ENCODE measurements at regions of chr2 and their contacts with region 1.

Region 1: GRCh38 chr2:143909577-143910353 is 610.2 kb downstream of the ZEB2 start:
- DNase-seq: no peak
- ATAC-seq: no peak
- H3K4me3 ChIP-seq: no peak overlapping the region
- H3K27ac ChIP-seq: no peak overlapping the region
- H3K4me1 ChIP-seq: no peaks in the 10 kb centered on the region
- H3K27me3 ChIP-seq: no peaks in the 10 kb centered on the region; the same call in 1 of the 2 replicates
- CTCF ChIP-seq: no peak

Region 2: DNA sequence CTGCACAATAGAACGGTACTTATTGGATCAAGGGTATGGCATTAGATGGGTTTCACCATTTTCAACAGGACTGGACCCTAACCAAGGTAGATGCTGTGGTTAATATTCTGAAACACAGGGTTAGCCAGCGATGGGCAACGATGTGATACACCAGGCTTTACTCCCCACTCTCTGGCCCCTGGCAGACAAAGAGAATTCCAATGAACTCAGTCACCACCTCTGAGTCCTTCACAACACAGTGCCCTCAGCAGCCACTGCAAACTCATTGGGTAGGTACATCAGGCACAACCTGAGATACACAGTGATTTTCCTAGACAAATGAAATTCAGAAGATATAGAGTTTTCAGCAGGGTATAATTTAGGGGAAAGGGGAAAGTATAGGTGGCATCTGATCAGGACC is 24.3 kb before region 1 on chr2:
- CTCF ChIA-PET with region 1: no interaction called
- POLR2A ChIA-PET with region 1: no interaction called
- in situ Hi-C with region 1: no loop called
- intact Hi-C with region 1: no loop called
- DNase-seq: no peak
- ATAC-seq: no peak
- H3K4me3 ChIP-seq: no peak overlapping the region
- H3K27ac ChIP-seq: no peak overlapping the region
- H3K4me1 ChIP-seq: no peaks in the 10 kb centered on the region
- H3K27me3 ChIP-seq: no peaks in the 10 kb centered on the region
- CTCF ChIP-seq: no peak

Region 3: GRCh38 chr2:144111437-144111836 is 201.7 kb after region 1 on chr2:
- CTCF ChIA-PET with region 1: no interaction called
- POLR2A ChIA-PET with region 1: no interaction called
- in situ Hi-C with region 1: no loop called
- intact Hi-C with region 1: no loop called
- DNase-seq: no peak
- ATAC-seq: no peak
- H3K4me3 ChIP-seq: no peak overlapping the region
- H3K27ac ChIP-seq: no peak overlapping the region
- H3K4me1 ChIP-seq: no peaks in the 10 kb centered on the region
- H3K27me3 ChIP-seq: no peaks in the 10 kb centered on the region
- CTCF ChIP-seq: no peak

Region 4: DNA sequence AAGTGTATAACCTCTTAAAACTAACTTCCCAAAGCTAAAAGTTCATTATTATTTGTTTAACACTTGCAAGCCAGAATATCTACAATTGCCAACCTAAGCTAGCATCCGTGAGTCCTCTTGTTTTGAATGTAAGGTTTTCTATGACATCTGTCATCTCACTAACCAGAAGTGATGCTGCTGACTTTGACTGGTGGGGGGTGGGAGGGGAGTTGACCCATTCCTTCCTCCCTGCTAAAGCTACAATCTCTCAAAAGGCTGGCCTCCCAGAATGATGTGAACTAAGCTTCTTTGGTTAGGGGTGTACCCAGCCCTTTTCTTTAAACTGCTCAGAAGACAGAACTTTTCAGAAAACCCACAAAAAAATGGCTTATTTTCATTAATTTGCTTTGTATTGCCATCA is 329.5 kb after region 1 on chr2:
- CTCF ChIA-PET with region 1: no interaction called
- POLR2A ChIA-PET with region 1: interaction called, 10 read pairs
- in situ Hi-C with region 1: no loop called
- intact Hi-C with region 1: no loop called
- DNase-seq: no peak
- ATAC-seq: no peak
- H3K4me3 ChIP-seq: no peak overlapping the region
- H3K27ac ChIP-seq: no peak overlapping the region
- H3K4me1 ChIP-seq: no peaks in the 10 kb centered on the region
- H3K27me3 ChIP-seq: no peaks in the 10 kb centered on the region
- CTCF ChIP-seq: no peak